ENCODE measurements at regions of chr5 and their contacts with region 1.

Region 1: GRCh38 chr5:158435161-158435616 is 576.2 kb upstream of the CLINT1 start:
- DNase-seq: peak; percentile 51
- ATAC-seq: peak; percentile 58
- H3K4me3 ChIP-seq: peak overlapping the region in 1 of 5 experiments; percentile 29
- H3K4me3 Mint-ChIP-seq: peak overlapping the region; percentile 82
- H3K27ac ChIP-seq: peak overlapping the region; percentile 28 to 69
- H3K27ac Mint-ChIP-seq: peak overlapping the region; percentile 75
- H3K4me1 ChIP-seq: peaks cover 54 to 64% of the 10 kb centered on the region in 2 donors
- H3K4me1 Mint-ChIP-seq: peaks cover 74% of the 10 kb centered on the region
- H3K27me3 ChIP-seq: no peaks in the 10 kb centered on the region
- H3K27me3 Mint-ChIP-seq: no peaks in the 10 kb centered on the region
- CTCF ChIP-seq: no peak

Region 2: DNA sequence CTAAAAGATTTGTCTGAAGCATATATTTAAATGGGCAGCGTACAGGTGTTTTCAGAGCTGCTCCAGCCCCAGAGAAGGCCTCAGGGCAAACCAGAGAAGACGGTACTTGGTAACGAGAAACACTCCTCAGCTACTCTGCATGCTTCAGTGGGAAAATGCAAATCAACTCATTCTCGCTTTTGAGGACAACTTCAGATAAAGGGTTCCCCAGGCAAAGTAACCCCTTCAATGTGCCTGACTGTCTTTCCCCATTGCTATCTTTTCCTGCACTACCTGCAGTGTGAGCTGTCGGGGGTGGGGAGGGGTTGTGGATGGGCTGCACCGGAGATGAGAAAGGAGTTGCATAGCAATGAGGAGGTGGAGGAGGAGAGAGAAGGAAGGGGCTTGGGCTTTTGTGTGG is 236.6 kb before region 1 on chr5:
- CTCF ChIA-PET with region 1: no interaction called
- POLR2A ChIA-PET with region 1: no interaction called
- intact Hi-C with region 1: loop called (anchors 10 kb)
- DNase-seq: peak; percentile 70
- ATAC-seq: peak; percentile 62
- H3K4me3 ChIP-seq: peak overlapping the region in 1 of 5 experiments; percentile 11
- H3K4me3 Mint-ChIP-seq: peak overlapping the region; percentile 58
- H3K27ac ChIP-seq: no peak overlapping the region
- H3K27ac Mint-ChIP-seq: peak overlapping the region; percentile 57
- H3K4me1 ChIP-seq: peaks cover 43 to 50% of the 10 kb centered on the region in 2 donors
- H3K4me1 Mint-ChIP-seq: peaks cover 53% of the 10 kb centered on the region
- H3K27me3 ChIP-seq: no peaks in the 10 kb centered on the region
- H3K27me3 Mint-ChIP-seq: no peaks in the 10 kb centered on the region
- CTCF ChIP-seq: no peak

Region 3: GRCh38 chr5:158543539-158544387 is 108.6 kb after region 1 on chr5:
- CTCF ChIA-PET with region 1: no interaction called
- POLR2A ChIA-PET with region 1: no interaction called
- intact Hi-C with region 1: no loop called
- DNase-seq: no peak
- ATAC-seq: no peak
- H3K4me3 ChIP-seq: no peak overlapping the region
- H3K4me3 Mint-ChIP-seq: no peak overlapping the region
- H3K27ac ChIP-seq: no peak overlapping the region
- H3K27ac Mint-ChIP-seq: no peak overlapping the region
- H3K4me1 ChIP-seq: peaks cover 21 to 23% of the 10 kb centered on the region in 2 donors
- H3K4me1 Mint-ChIP-seq: peaks cover 35% of the 10 kb centered on the region
- H3K27me3 ChIP-seq: no peaks in the 10 kb centered on the region
- H3K27me3 Mint-ChIP-seq: no peaks in the 10 kb centered on the region
- CTCF ChIP-seq: no peak

Measured in B cell (primary cell).